HepG2 (cell line): ENCODE measurements at regions of chr16 and their contacts with region 1.

Region 1: GRCh38 chr16:49183911-49184310 is 97.7 kb downstream of the CBLN1 start:
- DNase-seq: peak; percentile 20
- ATAC-seq: peak; percentile 93
- H3K4me3 ChIP-seq: no peak overlapping the region
- H3K27ac ChIP-seq: no peak overlapping the region
- H3K4me1 ChIP-seq: no peaks in the 10 kb centered on the region
- H3K27me3 ChIP-seq: no peaks in the 10 kb centered on the region
- CTCF ChIP-seq: peak; percentile 74
- EP300 ChIP-seq: no peak
- POLR2A ChIP-seq: no peak
- RAD21 ChIP-seq: no peak

Region 2: GRCh38 chr16:49000594-49000993 is 183.3 kb before region 1 on chr16:
- CTCF ChIA-PET with region 1: no interaction called
- POLR2A ChIA-PET with region 1: no interaction called
- in situ Hi-C with region 1: no loop called
- intact Hi-C with region 1: loop called (anchors 1 kb)
- DNase-seq: no peak
- ATAC-seq: peak; percentile 45; the same call in 1 of the 3 replicates
- H3K4me3 ChIP-seq: no peak overlapping the region
- H3K27ac ChIP-seq: no peak overlapping the region
- H3K4me1 ChIP-seq: peaks cover 7% of the 10 kb centered on the region; the same call in 1 of the 2 replicates
- H3K27me3 ChIP-seq: no peaks in the 10 kb centered on the region
- CTCF ChIP-seq: peak; percentile 45
- EP300 ChIP-seq: no peak
- POLR2A ChIP-seq: no peak
- RAD21 ChIP-seq: no peak

Region 3: DNA sequence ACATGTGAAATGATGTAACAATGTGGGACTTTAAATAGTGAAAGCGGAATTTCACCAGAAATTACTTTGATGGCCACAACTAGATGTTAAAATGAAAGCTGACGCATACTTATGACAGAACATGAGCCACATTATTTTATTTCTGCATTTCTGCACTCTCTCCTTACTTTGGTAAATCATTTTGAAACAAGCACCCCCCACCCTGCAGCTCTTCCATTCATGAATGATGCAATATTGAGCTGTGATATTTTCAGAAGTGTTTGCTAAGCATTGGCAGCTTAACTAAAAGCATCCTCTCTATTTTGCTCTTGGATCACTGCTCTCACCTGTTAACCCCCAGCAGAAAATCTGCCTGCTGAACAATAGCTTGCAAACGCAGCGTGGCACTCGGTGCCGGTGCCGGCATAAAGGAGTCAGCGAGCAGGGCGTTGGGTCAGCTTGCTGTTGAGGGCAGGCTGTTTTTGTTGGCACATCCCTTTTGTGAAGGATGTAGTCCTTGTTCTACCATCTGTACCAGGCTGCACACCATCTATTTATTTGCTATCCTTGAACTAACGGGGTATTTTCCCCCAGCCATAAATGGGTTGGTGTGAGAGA is 128.6 kb after region 1 on chr16:
- CTCF ChIA-PET with region 1: no interaction called
- POLR2A ChIA-PET with region 1: no interaction called
- in situ Hi-C with region 1: no loop called
- intact Hi-C with region 1: no loop called
- DNase-seq: no peak
- ATAC-seq: no peak
- H3K4me3 ChIP-seq: no peak overlapping the region
- H3K27ac ChIP-seq: no peak overlapping the region
- H3K4me1 ChIP-seq: no peaks in the 10 kb centered on the region
- H3K27me3 ChIP-seq: peaks cover 2 to 3% of the 10 kb centered on the region in 2 experiments; a peak in 2 of 5 replicates
- CTCF ChIP-seq: no peak
- EP300 ChIP-seq: no peak
- POLR2A ChIP-seq: no peak
- RAD21 ChIP-seq: no peak